GM12878 (cell line): ENCODE measurements at regions of chr2 and their contacts with region 1.

Region 1: DNA sequence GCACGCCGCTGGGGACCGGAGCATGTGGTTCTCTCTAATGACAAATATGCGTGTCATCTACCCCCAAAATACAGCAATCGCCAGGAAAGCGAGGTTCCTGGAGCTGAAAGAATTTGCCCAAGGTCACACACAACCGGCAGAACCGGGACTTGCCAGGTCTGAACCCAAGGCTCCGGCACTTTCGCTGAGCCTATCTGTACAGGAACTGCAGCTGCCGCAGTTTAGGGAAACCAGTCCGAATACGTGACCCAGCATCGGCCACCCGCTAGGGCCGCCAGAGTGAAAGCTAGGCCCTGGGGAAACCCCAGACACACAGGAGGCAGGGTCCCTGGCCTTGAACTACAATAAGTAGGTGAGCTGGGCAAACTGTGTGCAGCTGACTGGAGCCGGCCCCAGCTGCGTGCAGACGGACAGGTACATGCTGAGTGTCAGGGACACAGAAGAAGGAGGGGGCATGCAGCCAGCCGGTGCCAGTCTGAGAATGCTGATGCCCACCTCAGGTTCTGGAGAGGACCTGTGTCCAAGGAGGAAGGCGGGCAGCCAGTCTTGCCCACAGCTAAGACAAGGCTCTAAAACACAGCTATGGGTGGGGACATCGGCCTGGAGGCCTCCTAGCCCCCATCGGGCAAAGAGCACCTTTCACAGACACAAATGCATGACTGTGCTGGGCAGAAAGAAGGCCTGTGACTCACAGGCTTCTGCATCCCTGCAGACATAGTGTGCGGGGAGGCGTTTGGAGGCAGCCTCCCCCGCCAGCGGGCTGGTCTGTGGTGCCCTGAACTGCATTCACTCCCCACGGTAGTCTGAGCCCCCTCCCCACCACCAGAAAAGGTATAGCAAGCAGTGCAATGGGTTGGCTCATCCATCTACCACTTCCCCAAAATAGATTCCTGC is 107.5 kb upstream of the ID2 start:
- DNase-seq: no peak
- ATAC-seq: peak; percentile 77
- H3K4me3 ChIP-seq: peak overlapping the region; percentile 52; the same call in 1 of the 2 replicates
- H3K27ac ChIP-seq: peak overlapping the region; percentile 51
- H3K4me1 ChIP-seq: peaks cover 46% of the 10 kb centered on the region
- H3K27me3 ChIP-seq: no peaks in the 10 kb centered on the region
- CTCF ChIP-seq: 0 out of 6 replicates have a peak, but pooled peaks of 1 of the 3 experiments have one; percentile 9
- EP300 ChIP-seq: no peak
- POLR2A ChIP-seq: no peak
- RAD21 ChIP-seq: 0 out of 2 replicates have a peak, but pooled peaks have one; percentile 12

Region 2: GRCh38 chr2:8514796-8515758 is 59.3 kb before region 1 on chr2:
- CTCF ChIA-PET with region 1: interaction called, 4 read pairs
- POLR2A ChIA-PET with region 1: interaction called, 12 read pairs
- RAD21 ChIA-PET with region 1: interaction called, 25 read pairs
- SMC1A ChIA-PET with region 1: interaction called, 18 read pairs
- in situ Hi-C with region 1: no loop called
- intact Hi-C with region 1: no loop called
- DNase-seq: peak; percentile 99
- ATAC-seq: peak; percentile 82
- H3K4me3 ChIP-seq: peak overlapping the region; percentile 51; the same call in 1 of the 2 replicates
- H3K27ac ChIP-seq: peak overlapping the region; percentile 93
- H3K4me1 ChIP-seq: peaks cover 46% of the 10 kb centered on the region
- H3K27me3 ChIP-seq: no peaks in the 10 kb centered on the region
- CTCF ChIP-seq: no peak
- EP300 ChIP-seq: peak; percentile 76 to 95; a peak in 3 of 4 replicates
- POLR2A ChIP-seq: no peak
- RAD21 ChIP-seq: peak; percentile 36; the same call in 1 of the 2 replicates

Region 3: GRCh38 chr2:8551622-8552074 is 22.7 kb before region 1 on chr2:
- CTCF ChIA-PET with region 1: interaction called, 18 read pairs
- POLR2A ChIA-PET with region 1: interaction called, 58 read pairs
- RAD21 ChIA-PET with region 1: interaction called, 42 read pairs
- SMC1A ChIA-PET with region 1: interaction called, 67 read pairs
- in situ Hi-C with region 1: no loop called
- intact Hi-C with region 1: no loop called
- DNase-seq: no peak
- ATAC-seq: peak; percentile 88
- H3K4me3 ChIP-seq: no peak overlapping the region
- H3K27ac ChIP-seq: no peak overlapping the region; the same call in 1 of the 2 replicates
- H3K4me1 ChIP-seq: peaks cover 15% of the 10 kb centered on the region
- H3K27me3 ChIP-seq: no peaks in the 10 kb centered on the region
- CTCF ChIP-seq: no peak
- EP300 ChIP-seq: peak in 1 of 2 experiments; percentile 17; a peak in 1 of 4 replicates
- POLR2A ChIP-seq: no peak
- RAD21 ChIP-seq: no peak

Region 4: GRCh38 chr2:8558956-8559355 is 15.4 kb before region 1 on chr2:
- CTCF ChIA-PET with region 1: interaction called, 18 read pairs
- POLR2A ChIA-PET with region 1: interaction called, 58 read pairs
- RAD21 ChIA-PET with region 1: interaction called, 42 read pairs
- SMC1A ChIA-PET with region 1: interaction called, 67 read pairs
- in situ Hi-C with region 1: no loop called
- intact Hi-C with region 1: no loop called
- DNase-seq: no peak
- ATAC-seq: no peak
- H3K4me3 ChIP-seq: no peak overlapping the region
- H3K27ac ChIP-seq: no peak overlapping the region
- H3K4me1 ChIP-seq: no peaks in the 10 kb centered on the region
- H3K27me3 ChIP-seq: no peaks in the 10 kb centered on the region
- CTCF ChIP-seq: no peak
- EP300 ChIP-seq: no peak
- POLR2A ChIP-seq: no peak
- RAD21 ChIP-seq: no peak

Region 5: DNA sequence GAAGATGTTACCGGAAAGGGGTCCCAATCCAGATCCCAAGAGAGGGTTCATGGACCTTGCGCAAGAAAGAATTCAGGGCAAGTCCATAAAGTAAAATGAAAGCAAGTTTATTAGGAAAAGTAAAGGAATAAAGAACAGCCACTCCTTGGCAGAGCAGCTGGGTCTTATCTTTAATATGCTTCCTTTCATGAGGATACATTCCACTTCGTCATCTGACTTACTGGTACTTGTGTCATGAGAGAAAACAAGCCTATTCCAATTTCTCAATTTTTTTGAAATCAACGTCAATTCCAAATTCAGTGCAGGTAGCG is 46.6 kb after region 1 on chr2:
- CTCF ChIA-PET with region 1: interaction called, 3 read pairs
- POLR2A ChIA-PET with region 1: interaction called, 3 read pairs
- RAD21 ChIA-PET with region 1: interaction called, 20 read pairs
- SMC1A ChIA-PET with region 1: interaction called, 9 read pairs
- in situ Hi-C with region 1: no loop called
- intact Hi-C with region 1: no loop called
- DNase-seq: no peak
- ATAC-seq: no peak
- H3K4me3 ChIP-seq: no peak overlapping the region
- H3K27ac ChIP-seq: no peak overlapping the region
- H3K4me1 ChIP-seq: no peaks in the 10 kb centered on the region
- H3K27me3 ChIP-seq: peaks cover 0 to 8% of the 10 kb centered on the region in 2 experiments; a peak in 2 of 4 replicates
- CTCF ChIP-seq: no peak
- EP300 ChIP-seq: no peak
- POLR2A ChIP-seq: no peak
- RAD21 ChIP-seq: no peak

Region 6: DNA sequence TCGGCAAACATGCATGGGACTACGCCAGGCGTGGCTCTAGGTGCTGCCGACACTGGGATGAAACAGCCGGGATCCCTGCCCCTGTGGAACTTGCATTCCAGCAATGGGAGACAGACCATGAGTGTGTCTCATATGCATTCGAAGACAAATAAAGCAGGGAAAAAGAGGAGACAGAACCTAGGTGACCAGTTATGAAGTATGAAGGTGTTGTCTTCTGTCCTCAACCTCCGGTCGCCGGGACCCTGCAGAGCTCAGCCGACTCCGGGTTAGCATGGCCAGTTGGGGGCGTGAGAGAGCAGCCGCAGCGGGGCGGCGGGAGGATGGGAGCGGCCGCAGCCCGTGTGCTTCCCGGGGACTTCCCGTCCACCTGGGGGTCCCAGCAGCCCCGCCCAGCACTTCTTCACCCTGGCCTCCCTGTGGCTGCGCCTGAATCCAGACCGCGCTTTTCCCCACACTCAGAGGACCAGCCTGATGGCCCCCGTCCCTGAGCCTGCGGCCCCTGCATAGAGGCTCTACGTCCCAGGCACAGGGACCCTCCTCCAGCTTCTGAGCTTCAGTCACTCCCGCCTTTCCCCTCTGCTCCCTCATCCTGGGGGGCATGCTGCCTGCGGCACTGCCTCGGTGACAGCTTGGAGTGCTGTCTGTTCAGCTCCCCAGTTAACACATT is 118.9 kb after region 1 on chr2:
- CTCF ChIA-PET with region 1: no interaction called
- POLR2A ChIA-PET with region 1: no interaction called
- RAD21 ChIA-PET with region 1: no interaction called
- SMC1A ChIA-PET with region 1: no interaction called
- in situ Hi-C with region 1: no loop called
- intact Hi-C with region 1: no loop called
- DNase-seq: no peak
- ATAC-seq: peak; percentile 91
- H3K4me3 ChIP-seq: peak overlapping the region; percentile 44; the same call in 1 of the 2 replicates
- H3K27ac ChIP-seq: no peak overlapping the region
- H3K4me1 ChIP-seq: no peaks in the 10 kb centered on the region; the same call in 1 of the 2 replicates
- H3K27me3 ChIP-seq: no peaks in the 10 kb centered on the region
- CTCF ChIP-seq: peak; percentile 55 to 76 (median 58)
- EP300 ChIP-seq: no peak
- POLR2A ChIP-seq: no peak
- RAD21 ChIP-seq: peak; percentile 40

Region 7: GRCh38 chr2:8860239-8860638 is 285.8 kb after region 1 on chr2:
- CTCF ChIA-PET with region 1: no interaction called
- POLR2A ChIA-PET with region 1: no interaction called
- RAD21 ChIA-PET with region 1: no interaction called
- SMC1A ChIA-PET with region 1: no interaction called
- in situ Hi-C with region 1: no loop called
- intact Hi-C with region 1: no loop called
- DNase-seq: no peak
- ATAC-seq: peak; percentile 75
- H3K4me3 ChIP-seq: no peak overlapping the region
- H3K27ac ChIP-seq: no peak overlapping the region
- H3K4me1 ChIP-seq: no peaks in the 10 kb centered on the region
- H3K27me3 ChIP-seq: no peaks in the 10 kb centered on the region
- CTCF ChIP-seq: no peak
- EP300 ChIP-seq: no peak
- POLR2A ChIP-seq: no peak
- RAD21 ChIP-seq: no peak